ENCODE measurements at regions of chr2 and their contacts with region 1.

Region 1: GRCh38 chr2:25878361-25879132 is at the start of gene ASXL2:
- DNase-seq: peak; percentile 99
- ATAC-seq: peak; percentile 100
- total RNA-seq, gene ASXL2: 21.7 TPM

Region 2: GRCh38 chr2:25673300-25674076 is 205.1 kb before region 1 on chr2 and contains the start of gene DTNB:
- intact Hi-C with region 1: loop called (anchors 10 kb)
- DNase-seq: peak; percentile 92
- ATAC-seq: peak; percentile 90
- total RNA-seq, gene DTNB: 3.3 TPM

Region 3: GRCh38 chr2:25936889-25937545 is 58.5 kb after region 1 on chr2:
- intact Hi-C with region 1: loop called (anchors 2 kb)
- DNase-seq: no peak
- ATAC-seq: no peak

Region 4: GRCh38 chr2:25960920-25961319 is 82.4 kb after region 1 on chr2:
- intact Hi-C with region 1: no loop called
- DNase-seq: no peak
- ATAC-seq: no peak

Region 5: DNA sequence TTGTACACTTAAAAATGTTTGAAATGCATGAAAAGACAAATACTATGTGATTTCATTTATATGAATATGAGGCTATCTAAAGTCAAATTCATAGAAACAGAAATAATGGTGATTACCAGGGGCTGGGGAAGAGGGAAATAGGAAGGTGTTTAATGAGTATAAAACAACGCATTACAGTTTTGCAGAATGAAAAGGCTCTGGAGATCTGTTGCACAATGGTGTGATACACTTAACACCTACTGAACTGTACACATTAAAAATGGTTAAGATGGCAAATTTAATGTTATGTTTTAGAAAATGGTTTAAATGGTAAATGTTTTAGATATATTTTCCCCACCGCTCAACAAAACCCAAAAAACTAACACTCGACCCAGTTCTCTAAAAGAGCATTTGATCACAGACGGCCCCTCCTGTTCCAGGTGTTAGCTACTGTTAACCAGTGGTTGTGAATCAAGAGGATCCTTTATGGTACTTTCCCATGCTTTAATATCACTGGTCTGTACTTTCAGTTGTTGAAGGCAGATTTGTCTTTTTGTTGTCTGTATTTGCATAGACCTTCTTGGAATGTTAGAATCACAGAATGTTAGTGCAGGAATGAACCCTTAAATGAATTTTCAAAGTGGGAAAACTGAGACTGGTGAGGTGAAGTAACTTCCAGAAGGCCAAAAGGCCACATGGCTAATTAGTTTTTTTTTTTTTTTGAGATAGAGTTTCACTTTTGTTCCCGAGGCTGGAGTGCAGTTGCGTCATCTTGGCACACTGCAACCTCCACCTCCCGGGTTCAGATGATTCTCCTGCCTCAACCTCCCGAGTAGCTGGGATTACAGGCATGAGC is 165.5 kb after region 1 on chr2:
- intact Hi-C with region 1: no loop called
- DNase-seq: no peak
- ATAC-seq: peak; percentile 46

Region 6: DNA sequence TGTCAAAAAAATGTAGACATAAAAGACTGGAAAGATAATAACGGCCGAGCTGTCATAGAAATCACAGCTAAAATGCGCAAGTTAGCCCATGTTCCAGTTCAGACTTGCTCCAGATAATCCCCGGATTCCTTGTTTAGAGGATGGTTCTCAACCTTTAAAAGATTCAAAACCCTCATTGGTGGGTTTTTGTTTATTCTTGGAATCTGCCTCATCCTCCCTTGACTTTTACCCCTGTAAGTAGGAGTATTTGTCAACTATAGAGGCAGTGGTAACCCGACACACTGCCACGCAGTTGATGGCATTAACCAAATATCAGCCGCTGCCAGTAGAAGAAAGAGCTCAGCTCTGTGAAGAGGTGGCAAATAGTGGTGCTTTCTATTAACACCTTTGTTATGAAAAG is 426.9 kb after region 1 on chr2:
- intact Hi-C with region 1: no loop called
- DNase-seq: no peak
- ATAC-seq: no peak

Region 7: DNA sequence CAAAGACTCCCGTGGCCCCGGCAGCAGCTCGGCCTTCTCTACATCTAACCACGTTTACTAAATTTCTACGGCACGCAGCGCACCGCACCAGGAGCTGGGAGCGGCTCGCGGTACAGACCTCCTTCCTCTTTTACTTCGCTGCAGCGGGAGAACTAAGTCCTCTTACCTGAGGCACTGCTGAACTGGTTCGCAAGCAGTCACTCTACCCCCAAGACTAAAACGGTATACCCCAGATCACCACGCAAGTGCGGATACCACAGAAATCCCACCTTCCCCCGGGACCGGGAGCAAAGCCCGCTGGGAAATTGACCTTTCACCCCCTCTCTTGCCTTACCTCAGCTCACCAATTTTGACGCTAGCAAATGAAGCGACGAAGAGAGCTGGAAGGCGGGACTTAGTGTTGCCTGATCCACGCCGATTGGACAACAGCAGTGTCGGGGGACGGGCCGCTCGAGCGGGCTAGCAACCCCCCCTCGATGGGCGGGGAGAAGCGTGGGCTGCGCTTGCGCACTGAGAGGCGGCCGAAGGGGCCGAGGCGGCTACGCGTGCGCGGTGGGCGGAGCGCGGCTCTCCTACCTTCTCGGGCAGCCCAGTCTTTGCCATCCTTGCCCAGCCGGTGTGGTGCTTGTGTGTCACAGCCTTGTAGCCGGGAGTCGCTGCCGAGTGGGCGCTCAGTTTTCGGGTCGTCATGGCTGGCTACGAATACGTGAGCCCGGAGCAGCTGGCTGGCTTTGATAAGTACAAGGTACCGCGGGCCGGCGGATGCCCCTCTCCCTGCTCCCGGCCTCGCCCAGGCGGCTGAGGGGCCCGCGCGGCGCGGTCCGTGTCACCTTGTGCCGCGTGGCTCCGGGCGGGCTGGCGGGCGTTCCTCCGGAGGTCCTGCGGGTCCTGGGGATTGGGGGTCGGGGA is 467.3 kb after region 1 on chr2 and contains the start of gene SELENOI:
- intact Hi-C with region 1: loop called (anchors 10 kb)
- DNase-seq: peak; percentile 99
- ATAC-seq: peak; percentile 99
- total RNA-seq, gene SELENOI: 14.3 TPM